ENCODE measurements at regions of chr2 and their contacts with region 1.

Region 1: GRCh38 chr2:8574144-8575037 is 107.5 kb upstream of the ID2 start:
- DNase-seq: peak in 2 of 3 donors; percentile 68 to 76
- H3K4me3 ChIP-seq: peak overlapping the region in 3 of 7 experiments; percentile 22 to 60 (median 50)
- H3K27ac ChIP-seq: no peak overlapping the region
- H3K4me1 ChIP-seq: peaks cover 0 to 69% (median 46%) of the 10 kb centered on the region in 4 experiments
- H3K27me3 ChIP-seq: no peaks in the 10 kb centered on the region

Region 2: DNA sequence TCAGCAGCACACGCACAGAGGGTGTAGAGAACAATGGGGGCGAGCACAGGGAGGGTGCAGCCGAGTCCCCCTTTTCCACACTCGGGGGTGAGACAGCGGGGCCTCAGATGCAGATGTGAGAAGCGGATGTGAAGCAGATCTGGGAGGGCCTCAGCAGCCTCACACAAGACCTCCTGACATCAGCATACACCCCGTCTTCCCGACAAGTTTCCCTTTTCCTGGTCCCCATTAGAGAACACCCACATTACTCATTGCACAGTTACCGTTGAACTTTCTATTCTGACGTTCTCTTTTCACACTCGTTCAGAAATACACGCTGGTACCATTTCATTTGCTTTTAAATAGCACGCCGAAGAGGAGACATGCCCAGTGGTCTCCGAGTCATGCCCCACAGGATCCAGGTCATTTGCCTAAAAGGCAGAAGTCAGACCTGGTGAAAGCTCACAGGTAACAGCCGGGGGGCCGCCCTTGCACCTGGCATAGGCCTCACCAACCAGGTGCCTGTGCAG is 22.0 kb before region 1 on chr2:
- CTCF ChIA-PET with region 1: interaction called, 11 read pairs
- POLR2A ChIA-PET with region 1: no interaction called
- DNase-seq: no peak
- H3K4me3 ChIP-seq: no peak overlapping the region
- H3K27ac ChIP-seq: no peak overlapping the region
- H3K4me1 ChIP-seq: peaks cover 0 to 25% (median 10%) of the 10 kb centered on the region in 4 experiments
- H3K27me3 ChIP-seq: no peaks in the 10 kb centered on the region

Region 3: DNA sequence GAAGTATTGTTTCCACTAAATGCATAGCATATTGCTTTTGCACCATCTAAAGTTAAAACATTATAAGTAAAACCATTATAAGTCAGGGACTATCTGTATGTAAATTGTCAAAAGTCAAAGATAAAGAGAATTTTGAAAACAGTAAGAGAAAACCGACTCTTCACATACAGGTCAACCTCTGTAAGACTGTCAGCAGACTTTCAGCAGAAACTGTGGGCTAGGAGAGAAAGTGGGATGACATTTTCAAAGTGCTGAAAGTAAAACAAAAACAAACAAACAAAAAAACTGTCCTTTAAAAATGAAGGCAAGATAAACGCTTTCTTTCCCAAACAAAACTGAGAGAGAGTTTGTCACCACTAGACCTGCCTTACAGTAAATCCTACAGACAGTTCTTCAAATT is 15.4 kb before region 1 on chr2:
- CTCF ChIA-PET with region 1: interaction called, 13 read pairs
- POLR2A ChIA-PET with region 1: no interaction called
- DNase-seq: peak in 1 of 3 donors; percentile 43
- H3K4me3 ChIP-seq: no peak overlapping the region
- H3K27ac ChIP-seq: no peak overlapping the region
- H3K4me1 ChIP-seq: peaks cover 0 to 3% (median 2%) of the 10 kb centered on the region in 4 experiments
- H3K27me3 ChIP-seq: no peaks in the 10 kb centered on the region

Measured in common myeloid progenitor, CD34-positive (primary cell).